ENCODE measurements at regions of chr4 and their contacts with region 1.

Region 1: DNA sequence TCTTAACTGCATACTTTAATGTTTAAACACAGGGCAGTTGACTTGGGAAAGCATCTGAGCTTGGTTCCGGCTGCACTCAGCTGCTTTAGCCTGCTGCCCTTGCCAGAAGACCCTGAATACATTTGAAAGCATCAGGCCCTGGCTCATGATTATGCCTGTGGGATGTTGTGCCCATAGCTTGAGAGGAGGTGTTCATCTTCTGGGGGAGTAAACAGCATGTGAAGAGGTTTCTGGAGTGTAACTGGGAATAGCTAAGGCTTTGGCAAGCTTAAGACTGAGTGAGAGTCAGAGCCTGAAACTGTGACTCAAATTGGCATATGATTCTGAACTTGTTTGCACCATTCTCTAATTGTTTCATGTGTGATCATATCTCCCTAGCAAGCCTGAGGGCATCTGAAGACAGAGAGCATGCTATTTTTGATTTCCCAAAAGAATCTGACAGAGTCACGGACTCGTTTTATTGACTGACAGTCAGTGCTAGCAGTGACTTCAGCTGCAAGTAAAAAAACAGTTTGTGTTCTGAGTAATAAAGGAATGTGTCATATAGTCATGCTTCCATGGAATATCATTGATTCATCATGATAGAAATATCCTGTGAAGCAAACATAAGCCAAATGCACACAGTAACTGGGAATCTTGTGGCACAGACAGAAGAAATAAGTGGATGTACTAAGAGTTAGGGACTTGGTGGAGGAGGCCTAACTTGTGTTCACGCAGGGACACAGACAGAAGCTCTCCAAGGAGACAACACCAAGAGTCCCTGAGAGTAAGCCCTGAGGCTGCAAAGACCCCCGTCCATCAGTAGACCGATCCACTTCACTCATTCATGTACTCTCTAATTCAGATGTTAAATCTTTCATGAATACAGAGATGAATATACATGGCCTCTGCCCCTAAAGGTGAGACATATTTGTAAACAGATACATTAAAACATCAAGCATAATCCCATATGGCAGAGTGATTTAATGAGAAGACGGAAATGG is 100.7 kb downstream of the SYNPO2 start:
- DNase-seq: no peak
- H3K4me3 ChIP-seq: no peak overlapping the region
- H3K27ac ChIP-seq: peak overlapping the region; percentile 86
- H3K4me1 ChIP-seq: peaks cover 0 to 100% (median 53%) of the 10 kb centered on the region in 4 donors
- H3K27me3 ChIP-seq: no peaks in the 10 kb centered on the region
- CTCF ChIP-seq: no peak

Region 2: DNA sequence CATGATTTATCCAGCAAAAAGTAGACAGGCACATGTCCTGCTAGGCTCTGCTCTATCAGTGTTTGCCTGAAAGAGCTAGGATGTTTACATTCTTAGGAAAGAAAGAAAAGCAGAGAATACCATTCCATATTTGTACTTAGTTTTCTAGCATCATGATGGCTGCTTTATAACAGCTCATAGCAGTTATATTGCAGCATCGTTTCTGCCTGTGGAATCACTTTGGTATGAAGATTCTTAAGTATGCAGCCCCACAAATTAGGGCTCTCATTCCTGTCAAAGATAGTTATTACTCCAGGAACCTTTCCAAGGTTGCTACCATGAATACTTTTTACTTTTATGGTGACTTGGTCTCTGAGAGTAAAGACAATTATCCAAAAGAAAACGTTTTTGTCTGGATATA is 27.2 kb after region 1 on chr4:
- intact Hi-C with region 1: loop called (anchors 2 kb)
- DNase-seq: no peak
- H3K4me3 ChIP-seq: no peak overlapping the region
- H3K27ac ChIP-seq: peak overlapping the region; percentile 68 to 81
- H3K4me1 ChIP-seq: peaks cover 0 to 78% (median 11%) of the 10 kb centered on the region in 4 donors
- H3K27me3 ChIP-seq: no peaks in the 10 kb centered on the region
- CTCF ChIP-seq: no peak